HEK293 (cell line): ENCODE measurements at regions of chr6 and their contacts with region 1.

Region 1: DNA sequence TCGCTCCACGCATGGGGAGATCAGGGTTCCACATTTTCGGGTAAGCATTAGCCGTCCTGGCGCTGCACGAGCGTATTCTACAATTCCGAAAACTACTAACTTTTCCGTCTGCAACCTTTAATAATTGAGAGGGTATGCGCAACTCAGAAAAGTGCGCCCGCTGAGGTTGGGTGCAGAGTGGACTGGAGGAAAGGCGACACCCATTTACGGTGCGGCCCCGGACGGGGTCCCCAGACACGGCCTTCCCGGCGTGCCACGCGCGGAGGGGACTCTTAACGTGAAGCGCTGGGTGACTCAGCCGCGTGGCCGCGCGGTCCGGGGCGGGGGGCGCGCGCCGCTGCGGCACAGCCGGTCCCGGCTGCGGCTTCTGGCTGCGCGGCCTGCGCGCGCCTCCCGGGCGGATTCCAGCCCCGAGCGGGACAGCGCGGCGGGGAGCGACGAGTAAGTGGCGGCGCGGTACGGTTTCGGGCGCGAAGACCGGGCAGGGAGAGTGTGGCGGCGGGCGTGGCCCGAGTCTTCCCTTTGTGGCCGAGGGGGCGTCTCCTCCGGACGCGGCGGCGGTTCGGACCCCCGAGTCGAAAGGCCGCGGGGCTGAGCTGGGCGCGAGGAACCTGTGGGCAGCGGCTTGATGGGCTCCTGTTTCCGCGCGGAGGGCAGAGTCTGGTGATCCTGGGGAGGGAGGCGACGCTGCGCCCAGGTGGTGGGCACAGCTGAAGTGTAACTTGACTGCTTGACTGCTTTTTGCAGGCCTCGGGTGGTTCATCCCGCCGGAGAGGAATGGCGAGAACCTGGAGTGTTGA is at the starts of genes KCTD20 and PXT1:
- H3K4me3 ChIP-seq: peak within 1 kb of the TSS; percentile 74
- H3K27ac ChIP-seq: peak within 1 kb of the TSS; percentile 95
- H3K4me1 ChIP-seq: peaks cover 11% of the 10 kb centered on the region
- CTCF ChIP-seq: 0 out of 2 replicates have a peak, but pooled peaks have one; percentile 7

Region 2: DNA sequence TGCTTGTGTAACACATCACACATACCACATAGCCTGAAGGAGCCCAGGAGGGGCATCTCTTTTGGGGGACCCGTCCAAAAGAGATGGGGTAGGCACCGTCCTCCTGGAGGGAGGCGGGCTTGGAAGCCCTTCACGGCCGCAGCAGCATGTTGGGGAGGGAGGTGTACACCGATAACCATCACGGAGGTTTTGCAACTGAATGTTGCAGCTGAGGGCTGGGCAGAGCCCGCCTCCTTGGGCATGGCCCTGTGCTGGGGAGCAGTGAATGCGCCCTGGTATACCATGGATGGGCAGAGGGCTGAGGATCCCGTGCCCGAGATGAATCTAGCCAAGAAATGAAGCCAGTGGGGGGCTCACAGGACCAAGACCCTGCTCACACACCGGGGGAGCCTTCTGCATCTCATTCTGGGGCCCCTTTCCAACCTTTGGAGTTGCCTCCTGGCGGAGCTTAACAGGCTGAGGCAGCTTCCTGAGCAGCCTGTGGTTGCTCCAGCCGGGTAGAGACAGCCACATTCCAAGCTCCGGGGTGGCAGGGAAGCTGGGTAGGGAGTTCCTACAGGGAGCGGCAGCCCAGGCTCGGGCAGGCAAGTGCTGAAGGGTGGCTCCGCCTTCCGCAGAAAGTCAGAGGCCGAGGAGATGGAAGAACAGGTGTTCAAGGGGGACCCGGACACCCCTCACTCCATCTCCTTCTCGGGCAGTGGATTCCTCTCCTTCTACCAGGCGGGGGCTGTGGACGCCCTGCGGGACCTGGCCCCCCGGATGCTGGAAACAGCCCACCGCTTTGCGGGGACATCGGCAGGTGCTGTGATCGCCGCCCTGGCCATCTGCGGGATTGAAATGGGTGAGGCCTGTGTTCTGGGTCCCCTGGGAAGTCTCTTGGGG is 172.8 kb before region 1 on chr6 and contains the start of gene PNPLA1:
- CTCF ChIA-PET with region 1: no interaction called
- POLR2A ChIA-PET with region 1: no interaction called
- H3K4me3 ChIP-seq: no peak within 1 kb of the TSS
- H3K27ac ChIP-seq: no peak within 1 kb of the TSS
- H3K4me1 ChIP-seq: no peaks in the 10 kb centered on the region
- CTCF ChIP-seq: no peak

Region 3: DNA sequence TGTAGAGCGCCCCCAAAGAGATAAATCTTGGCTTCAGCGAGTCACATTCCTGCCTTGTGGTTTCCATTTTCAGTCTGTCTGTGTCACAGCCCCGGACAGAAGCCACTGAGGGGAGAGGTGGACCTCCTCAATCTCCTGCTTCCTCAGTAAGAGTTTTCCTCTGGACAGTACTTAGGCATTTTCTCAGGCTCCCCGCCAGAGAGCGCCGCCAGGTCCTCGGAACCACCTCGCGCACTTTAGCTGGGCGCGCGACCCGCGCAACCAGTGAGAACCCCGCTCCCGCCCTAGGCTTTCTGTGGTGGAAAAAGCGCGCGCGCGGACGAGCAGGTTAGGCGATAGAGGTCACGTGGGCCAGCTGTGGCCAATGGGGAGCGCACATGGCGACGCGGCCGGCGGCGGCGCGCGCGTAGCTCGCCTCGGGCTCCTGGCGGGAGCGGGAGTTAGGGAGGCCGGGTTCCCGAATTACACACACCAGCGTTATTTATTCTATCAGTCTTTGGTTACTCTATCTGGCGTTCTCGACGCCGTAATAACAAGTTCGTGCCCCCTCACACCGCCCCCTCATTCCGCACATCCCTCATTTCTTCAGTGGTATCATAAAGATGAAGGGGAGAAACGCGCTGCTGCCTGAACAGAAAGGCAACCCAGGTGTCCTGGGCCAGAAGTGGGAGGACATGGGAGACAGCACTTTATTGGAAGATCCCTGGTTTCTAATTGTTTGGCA is 19.6 kb before region 1 on chr6:
- CTCF ChIA-PET with region 1: interaction called, 9 read pairs
- POLR2A ChIA-PET with region 1: interaction called, 28 read pairs
- H3K4me3 ChIP-seq: peak overlapping the region; percentile 39
- H3K27ac ChIP-seq: peak overlapping the region; percentile 60; the same call in 1 of the 2 replicates
- H3K4me1 ChIP-seq: no peaks in the 10 kb centered on the region
- CTCF ChIP-seq: peak; percentile 84; the same call in 1 of the 2 replicates